ENCODE measurements at regions of chr6 and their contacts with region 1.

Region 1: DNA sequence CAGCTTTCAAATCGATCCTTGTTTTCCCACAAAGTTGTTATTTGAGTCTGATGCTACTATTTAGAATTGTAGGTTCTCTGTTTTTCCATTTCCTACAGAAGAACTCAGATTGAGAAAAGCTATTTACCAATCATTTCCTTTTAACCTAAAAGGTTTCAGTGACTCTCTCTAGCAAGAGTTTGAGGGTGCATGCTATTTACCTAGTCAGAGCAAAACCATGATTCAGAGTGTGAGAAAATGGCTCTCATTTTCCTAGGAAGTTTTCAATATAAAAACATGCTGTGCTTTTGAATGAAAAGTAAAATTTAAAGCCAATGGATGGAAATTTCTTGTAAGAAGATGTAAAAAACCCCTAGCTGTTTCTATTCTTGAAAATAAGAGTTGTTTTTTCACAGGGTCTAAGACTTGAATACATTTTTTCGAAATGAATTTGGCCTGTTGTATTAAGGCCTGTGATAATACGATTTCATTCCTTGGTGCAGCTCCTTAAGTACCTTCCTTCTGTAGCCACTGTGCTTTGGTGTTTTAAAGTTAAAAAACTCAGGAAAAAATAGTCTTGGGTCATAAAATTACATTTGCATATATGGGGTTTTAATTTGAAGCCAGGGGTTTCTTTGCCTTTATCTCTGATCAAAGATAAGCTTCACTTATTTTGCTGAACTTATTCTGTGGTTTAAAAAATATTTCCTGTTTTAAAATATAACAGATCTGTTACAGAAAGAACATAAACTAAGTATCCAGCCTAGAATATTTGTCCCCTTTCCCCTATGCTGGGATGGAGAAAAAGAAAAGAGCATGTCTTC is 18.0 kb upstream of the RSPH3 start:
- DNase-seq: no peak
- ATAC-seq: no peak
- H3K4me3 ChIP-seq: no peak overlapping the region
- H3K4me3 Mint-ChIP-seq: peak overlapping the region; percentile 39
- H3K27ac ChIP-seq: peak overlapping the region in 1 of 2 experiments; percentile 51
- H3K27ac Mint-ChIP-seq: peak overlapping the region; percentile 58
- H3K4me1 ChIP-seq: peaks cover 19% of the 10 kb centered on the region
- H3K4me1 Mint-ChIP-seq: peaks cover 45% of the 10 kb centered on the region
- H3K27me3 ChIP-seq: no peaks in the 10 kb centered on the region
- H3K27me3 Mint-ChIP-seq: no peaks in the 10 kb centered on the region
- CTCF ChIP-seq: no peak

Region 2: GRCh38 chr6:158231551-158232315 is 786.2 kb before region 1 on chr6:
- CTCF ChIA-PET with region 1: no interaction called
- POLR2A ChIA-PET with region 1: no interaction called
- intact Hi-C with region 1: no loop called
- DNase-seq: peak; percentile 37 to 89 (median 69)
- ATAC-seq: peak; percentile 72
- H3K4me3 ChIP-seq: peak overlapping the region; percentile 62 to 67
- H3K4me3 Mint-ChIP-seq: peak overlapping the region; percentile 84
- H3K27ac ChIP-seq: peak overlapping the region; percentile 52 to 68
- H3K27ac Mint-ChIP-seq: peak overlapping the region; percentile 87
- H3K4me1 ChIP-seq: peaks cover 10% of the 10 kb centered on the region
- H3K4me1 Mint-ChIP-seq: peaks cover 37% of the 10 kb centered on the region
- H3K27me3 ChIP-seq: no peaks in the 10 kb centered on the region
- H3K27me3 Mint-ChIP-seq: no peaks in the 10 kb centered on the region
- CTCF ChIP-seq: no peak

Region 3: GRCh38 chr6:158905277-158905676 is 112.7 kb before region 1 on chr6:
- CTCF ChIA-PET with region 1: no interaction called
- POLR2A ChIA-PET with region 1: no interaction called
- intact Hi-C with region 1: no loop called
- DNase-seq: no peak
- ATAC-seq: no peak
- H3K4me3 ChIP-seq: no peak overlapping the region
- H3K4me3 Mint-ChIP-seq: no peak overlapping the region
- H3K27ac ChIP-seq: no peak overlapping the region
- H3K27ac Mint-ChIP-seq: no peak overlapping the region
- H3K4me1 ChIP-seq: peaks cover 5% of the 10 kb centered on the region
- H3K4me1 Mint-ChIP-seq: peaks cover 4% of the 10 kb centered on the region
- H3K27me3 ChIP-seq: no peaks in the 10 kb centered on the region
- H3K27me3 Mint-ChIP-seq: no peaks in the 10 kb centered on the region
- CTCF ChIP-seq: no peak

Region 4: DNA sequence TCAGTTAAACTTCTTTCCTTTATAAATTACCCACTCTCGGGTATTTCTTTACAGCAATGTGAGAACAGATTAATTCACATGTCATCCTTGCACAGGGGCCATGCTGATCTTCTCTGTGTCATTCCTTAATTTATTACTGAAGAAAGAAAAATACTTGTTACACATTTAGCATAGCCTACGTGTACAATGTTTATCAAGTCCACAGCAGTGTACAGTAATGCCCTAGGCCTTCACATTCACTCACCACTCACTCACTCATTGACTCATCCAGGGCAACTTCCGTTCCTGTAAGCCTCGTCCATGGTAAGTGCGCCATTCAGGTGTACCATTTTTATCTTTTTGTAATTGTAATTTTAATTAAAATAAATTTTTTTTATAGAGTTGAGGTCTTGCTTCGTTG is 91.5 kb before region 1 on chr6:
- CTCF ChIA-PET with region 1: no interaction called
- POLR2A ChIA-PET with region 1: no interaction called
- intact Hi-C with region 1: no loop called
- DNase-seq: no peak
- ATAC-seq: no peak
- H3K4me3 ChIP-seq: no peak overlapping the region
- H3K4me3 Mint-ChIP-seq: no peak overlapping the region
- H3K27ac ChIP-seq: no peak overlapping the region
- H3K27ac Mint-ChIP-seq: no peak overlapping the region
- H3K4me1 ChIP-seq: no peaks in the 10 kb centered on the region
- H3K4me1 Mint-ChIP-seq: no peaks in the 10 kb centered on the region
- H3K27me3 ChIP-seq: no peaks in the 10 kb centered on the region
- H3K27me3 Mint-ChIP-seq: no peaks in the 10 kb centered on the region
- CTCF ChIP-seq: no peak

Region 5: DNA sequence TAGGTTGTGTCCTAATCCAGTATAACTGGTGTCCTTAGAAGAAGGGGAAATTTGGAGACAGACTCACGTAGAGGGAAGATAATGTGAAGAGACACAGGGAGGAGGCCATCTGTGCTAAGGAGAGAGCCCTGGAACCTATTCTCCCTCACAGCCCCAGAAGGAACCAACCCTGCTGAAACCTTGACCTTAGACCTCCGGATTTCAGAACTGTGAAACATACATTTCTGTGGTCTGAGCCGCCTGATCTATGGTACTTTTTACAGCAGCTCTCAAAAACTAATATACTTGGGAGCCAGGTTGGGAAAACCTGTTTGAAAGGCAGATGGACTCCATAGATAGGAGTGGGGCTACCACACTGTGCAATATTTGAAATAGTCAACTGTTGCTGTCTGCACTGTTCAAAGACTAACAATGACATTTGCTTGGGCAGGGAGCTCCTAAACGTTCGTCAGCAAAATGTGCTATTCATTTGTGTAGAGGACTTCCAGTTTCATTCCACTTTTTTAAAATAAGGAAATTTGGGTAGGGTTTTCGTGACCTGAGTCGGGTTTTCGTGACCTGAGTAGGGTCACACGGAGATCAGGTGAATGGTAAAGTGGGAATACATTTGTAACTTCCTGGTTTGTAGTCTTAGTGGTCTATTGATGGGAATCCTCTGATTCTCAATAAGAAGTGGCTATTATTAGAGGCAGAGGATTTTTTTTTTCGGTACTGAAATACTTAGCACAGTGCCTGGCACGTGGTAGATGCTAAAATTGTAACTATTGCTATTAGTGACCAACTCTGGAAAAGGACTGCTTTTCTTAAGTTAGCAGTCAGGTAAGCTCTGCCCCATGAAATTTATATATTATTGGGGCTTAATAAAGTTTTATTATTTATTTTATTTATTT is 15.4 kb after region 1 on chr6:
- CTCF ChIA-PET with region 1: interaction called, 118 read pairs
- POLR2A ChIA-PET with region 1: interaction called, 3 read pairs
- intact Hi-C with region 1: loop called in 1 of 2 experiments (anchors 2 kb)
- DNase-seq: no peak
- ATAC-seq: no peak
- H3K4me3 ChIP-seq: no peak overlapping the region
- H3K4me3 Mint-ChIP-seq: no peak overlapping the region
- H3K27ac ChIP-seq: peak overlapping the region in 1 of 2 experiments; percentile 10
- H3K27ac Mint-ChIP-seq: peak overlapping the region; percentile 80
- H3K4me1 ChIP-seq: peaks cover 15% of the 10 kb centered on the region
- H3K4me1 Mint-ChIP-seq: peaks cover 31% of the 10 kb centered on the region
- H3K27me3 ChIP-seq: no peaks in the 10 kb centered on the region
- H3K27me3 Mint-ChIP-seq: no peaks in the 10 kb centered on the region
- CTCF ChIP-seq: no peak

Measured in CD8-positive, alpha-beta T cell (primary cell).